Activated CD8-positive, alpha-beta T cell treated with anti-CD3 and anti-CD28 coated beads for 36 hours (primary cell): ENCODE measurements at regions of chr3 and their contacts with region 1.

Region 1: DNA sequence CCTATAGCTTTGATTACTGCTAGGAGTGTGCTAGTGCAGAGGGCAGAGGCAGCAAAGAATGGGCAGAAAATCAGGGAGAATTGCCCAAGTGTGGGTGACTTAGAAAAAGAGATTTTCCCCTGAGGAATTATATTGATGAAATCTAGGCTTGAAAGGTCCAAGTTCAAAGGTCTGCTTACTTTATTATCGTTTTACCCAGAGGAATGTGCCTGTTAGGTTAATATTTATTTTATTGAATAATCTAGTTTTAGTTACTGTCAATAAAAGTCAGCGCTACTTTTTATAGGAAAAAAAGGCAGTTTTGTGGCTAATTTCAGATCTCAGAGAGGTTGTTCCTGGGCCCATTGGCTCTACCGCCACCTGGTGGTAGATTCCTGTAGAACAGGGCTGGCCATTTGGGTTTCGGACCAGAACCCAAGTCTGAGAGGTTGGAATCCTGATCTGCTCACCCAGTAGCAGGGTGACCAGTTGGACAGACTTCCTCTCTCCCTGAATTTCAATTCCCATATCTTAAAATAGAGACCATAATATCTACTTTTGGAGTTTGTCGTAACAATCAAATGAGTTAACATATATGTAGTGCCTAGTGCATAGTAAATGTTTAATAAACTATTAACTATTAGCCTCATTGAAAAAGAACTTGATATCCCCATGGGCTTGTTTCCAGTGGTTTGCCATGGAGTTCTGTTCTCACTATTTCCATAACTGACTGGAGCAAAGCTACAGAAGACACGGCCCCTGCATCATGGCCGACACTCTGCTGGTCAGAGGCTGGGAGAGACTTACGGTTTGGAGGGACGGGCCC is 62.7 kb upstream of the ZNF148 start:
- DNase-seq: peak; percentile 70
- ATAC-seq: peak; percentile 68
- H3K4me3 Mint-ChIP-seq: no peak overlapping the region
- H3K27ac Mint-ChIP-seq: no peak overlapping the region
- H3K4me1 Mint-ChIP-seq: no peaks in the 10 kb centered on the region
- H3K27me3 Mint-ChIP-seq: no peaks in the 10 kb centered on the region
- CTCF ChIP-seq: peak; percentile 94

Region 2: DNA sequence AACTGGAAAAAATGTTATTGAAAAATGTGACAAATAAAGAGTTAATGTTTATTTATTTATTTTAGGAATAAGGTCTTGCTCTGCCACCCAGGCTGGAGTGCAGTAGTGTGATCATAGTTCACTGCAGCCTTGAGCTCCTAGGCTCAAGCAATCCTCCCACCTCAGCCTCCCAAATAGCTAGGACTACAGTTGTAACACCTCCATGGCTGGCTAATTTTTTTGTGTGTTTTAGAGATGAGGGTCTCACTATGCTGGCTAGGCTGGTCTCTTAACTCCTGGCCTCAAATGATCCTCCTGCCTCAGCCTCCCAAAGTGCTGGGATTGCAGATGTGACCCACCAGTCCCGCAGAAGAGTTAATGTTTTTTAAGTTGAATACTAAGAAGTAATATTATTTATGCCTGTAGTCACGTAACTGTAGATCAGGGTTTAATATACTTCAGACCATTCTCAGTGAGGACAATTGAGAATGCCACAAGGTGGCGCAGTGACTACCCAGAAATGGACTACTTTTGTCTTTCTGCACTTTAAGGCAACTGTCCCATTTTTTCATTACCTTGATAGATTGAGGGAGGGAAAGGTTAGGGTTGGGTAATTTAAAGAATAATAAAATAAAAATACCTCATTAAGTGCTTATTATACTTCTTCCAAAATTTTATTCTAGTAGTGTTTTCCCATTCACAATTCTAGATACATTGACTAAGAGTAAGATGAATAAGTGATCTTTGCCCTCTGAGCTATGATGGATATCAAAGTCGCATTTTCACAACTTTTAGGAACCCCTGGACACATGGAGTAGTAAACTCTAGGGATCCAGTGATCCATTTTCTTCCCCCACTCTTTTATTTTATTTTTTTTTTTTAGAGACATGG is 509.3 kb before region 1 on chr3:
- CTCF ChIA-PET with region 1: no interaction called
- POLR2A ChIA-PET with region 1: no interaction called
- intact Hi-C with region 1: loop called (anchors 5 kb)
- DNase-seq: peak; percentile 85
- ATAC-seq: peak; percentile 55
- H3K4me3 Mint-ChIP-seq: no peak overlapping the region
- H3K27ac Mint-ChIP-seq: no peak overlapping the region
- H3K4me1 Mint-ChIP-seq: peaks cover 5% of the 10 kb centered on the region
- H3K27me3 Mint-ChIP-seq: peaks cover 16% of the 10 kb centered on the region
- CTCF ChIP-seq: peak; percentile 77

Region 3: GRCh38 chr3:124995460-124995994 is 442.3 kb before region 1 on chr3:
- CTCF ChIA-PET with region 1: interaction called, 8 read pairs
- POLR2A ChIA-PET with region 1: no interaction called
- intact Hi-C with region 1: loop called (anchors 5 kb)
- DNase-seq: peak; percentile 54
- ATAC-seq: peak; percentile 85
- H3K4me3 Mint-ChIP-seq: no peak overlapping the region
- H3K27ac Mint-ChIP-seq: no peak overlapping the region
- H3K4me1 Mint-ChIP-seq: no peaks in the 10 kb centered on the region
- H3K27me3 Mint-ChIP-seq: no peaks in the 10 kb centered on the region
- CTCF ChIP-seq: peak; percentile 59

Region 4: GRCh38 chr3:125150525-125151441 is 287.1 kb before region 1 on chr3:
- CTCF ChIA-PET with region 1: interaction called, 3 read pairs
- POLR2A ChIA-PET with region 1: no interaction called
- intact Hi-C with region 1: loop called (anchors 5 kb)
- DNase-seq: peak; percentile 81
- ATAC-seq: peak; percentile 88
- H3K4me3 Mint-ChIP-seq: no peak overlapping the region
- H3K27ac Mint-ChIP-seq: no peak overlapping the region
- H3K4me1 Mint-ChIP-seq: peaks cover 34% of the 10 kb centered on the region
- H3K27me3 Mint-ChIP-seq: peaks cover 6% of the 10 kb centered on the region
- CTCF ChIP-seq: peak; percentile 80

Region 5: DNA sequence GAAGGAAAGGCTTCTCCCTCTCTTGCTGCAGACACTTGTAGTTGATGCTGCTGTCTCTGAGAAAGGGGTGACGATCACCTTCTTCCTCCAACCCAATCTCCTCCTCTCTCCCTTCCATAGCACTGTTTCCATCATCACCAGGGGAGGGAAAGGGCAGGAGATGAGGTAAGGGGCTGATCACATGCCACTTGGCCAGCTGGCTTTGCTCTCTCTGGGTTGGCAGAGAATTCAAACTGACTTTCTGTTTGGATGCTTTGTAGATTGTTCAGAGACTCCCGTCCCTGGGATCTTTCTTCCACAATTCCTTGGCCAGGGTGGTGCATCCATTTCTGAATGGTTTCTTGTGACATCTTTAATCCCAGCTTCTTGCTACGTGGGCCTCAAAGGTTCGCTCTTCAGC is 19.5 kb before region 1 on chr3:
- CTCF ChIA-PET with region 1: interaction called, 12 read pairs
- POLR2A ChIA-PET with region 1: interaction called, 3 read pairs
- intact Hi-C with region 1: no loop called
- DNase-seq: no peak
- ATAC-seq: no peak
- H3K4me3 Mint-ChIP-seq: no peak overlapping the region
- H3K27ac Mint-ChIP-seq: no peak overlapping the region
- H3K4me1 Mint-ChIP-seq: peaks cover 3% of the 10 kb centered on the region
- H3K27me3 Mint-ChIP-seq: no peaks in the 10 kb centered on the region
- CTCF ChIP-seq: no peak

Region 6: DNA sequence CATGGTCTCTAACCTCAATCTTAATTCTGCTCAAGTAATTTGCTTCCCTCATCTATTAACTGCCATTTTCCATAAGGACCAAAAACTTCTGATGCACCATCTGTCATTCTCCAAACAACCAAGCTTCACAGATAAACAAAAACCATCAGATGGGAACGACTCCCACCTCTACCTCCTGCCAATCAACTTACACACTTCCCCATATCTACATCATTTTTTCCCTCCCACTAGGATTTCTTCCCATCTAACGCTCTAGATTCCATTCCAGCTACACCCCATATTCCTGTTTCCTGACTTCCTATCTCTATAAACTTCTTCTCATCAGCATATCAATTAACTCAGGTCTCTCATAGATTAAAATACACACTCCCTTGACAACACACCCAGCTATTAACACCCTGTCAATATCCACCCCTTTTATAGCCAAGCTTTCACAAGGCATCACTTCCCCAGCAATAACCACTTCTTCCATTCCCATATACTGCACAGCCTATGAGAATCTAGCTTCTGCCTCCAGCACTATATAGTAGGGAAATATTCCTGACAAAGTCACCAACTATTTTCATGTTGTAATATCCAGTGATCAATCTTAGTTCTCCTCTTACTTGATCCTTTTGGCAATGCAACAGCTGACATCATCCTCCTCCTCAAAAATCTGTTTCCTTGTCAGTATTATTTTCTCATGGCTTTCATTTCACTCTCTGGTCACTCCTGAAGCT is 43.0 kb after region 1 on chr3:
- CTCF ChIA-PET with region 1: no interaction called
- POLR2A ChIA-PET with region 1: no interaction called
- intact Hi-C with region 1: no loop called
- DNase-seq: no peak
- ATAC-seq: no peak
- H3K4me3 Mint-ChIP-seq: no peak overlapping the region
- H3K27ac Mint-ChIP-seq: no peak overlapping the region
- H3K4me1 Mint-ChIP-seq: no peaks in the 10 kb centered on the region
- H3K27me3 Mint-ChIP-seq: no peaks in the 10 kb centered on the region
- CTCF ChIP-seq: no peak

Region 7: DNA sequence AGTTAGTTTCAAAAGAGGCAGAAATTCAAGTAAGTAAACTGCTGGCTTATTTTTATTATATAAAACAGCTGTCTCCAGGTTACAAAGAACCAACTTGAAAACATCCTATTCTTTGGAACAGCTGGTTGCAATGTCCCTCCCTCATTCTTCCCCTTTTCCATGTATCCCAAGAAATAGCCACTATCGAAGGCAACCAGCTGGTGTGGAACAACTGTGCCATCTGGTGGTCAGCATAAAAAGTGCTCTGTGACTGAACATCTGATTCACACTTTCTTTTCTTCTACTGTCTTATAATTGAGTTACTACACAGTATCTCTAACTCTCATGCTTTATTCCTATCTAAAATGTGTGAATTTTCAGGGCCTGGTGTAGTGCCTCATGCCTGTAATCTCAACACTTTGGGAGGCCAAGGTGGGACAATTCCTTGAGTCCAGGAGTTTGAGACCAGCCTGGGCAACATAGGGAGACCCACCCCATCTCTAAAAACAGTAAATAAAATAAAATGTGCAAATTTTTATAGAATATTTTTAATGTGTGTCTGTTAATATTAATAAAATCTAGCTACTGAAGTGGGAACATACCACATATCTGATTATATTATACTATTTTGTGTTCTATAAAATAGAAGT is 147.9 kb after region 1 on chr3:
- CTCF ChIA-PET with region 1: interaction called, 5 read pairs
- POLR2A ChIA-PET with region 1: no interaction called
- intact Hi-C with region 1: loop called (anchors 10 kb)
- DNase-seq: peak; percentile 67
- ATAC-seq: peak; percentile 66
- H3K4me3 Mint-ChIP-seq: no peak overlapping the region
- H3K27ac Mint-ChIP-seq: no peak overlapping the region
- H3K4me1 Mint-ChIP-seq: peaks cover 28% of the 10 kb centered on the region
- H3K27me3 Mint-ChIP-seq: no peaks in the 10 kb centered on the region
- CTCF ChIP-seq: peak; percentile 95